ENCODE measurements at regions of chr3 and their contacts with region 1.

Region 1: DNA sequence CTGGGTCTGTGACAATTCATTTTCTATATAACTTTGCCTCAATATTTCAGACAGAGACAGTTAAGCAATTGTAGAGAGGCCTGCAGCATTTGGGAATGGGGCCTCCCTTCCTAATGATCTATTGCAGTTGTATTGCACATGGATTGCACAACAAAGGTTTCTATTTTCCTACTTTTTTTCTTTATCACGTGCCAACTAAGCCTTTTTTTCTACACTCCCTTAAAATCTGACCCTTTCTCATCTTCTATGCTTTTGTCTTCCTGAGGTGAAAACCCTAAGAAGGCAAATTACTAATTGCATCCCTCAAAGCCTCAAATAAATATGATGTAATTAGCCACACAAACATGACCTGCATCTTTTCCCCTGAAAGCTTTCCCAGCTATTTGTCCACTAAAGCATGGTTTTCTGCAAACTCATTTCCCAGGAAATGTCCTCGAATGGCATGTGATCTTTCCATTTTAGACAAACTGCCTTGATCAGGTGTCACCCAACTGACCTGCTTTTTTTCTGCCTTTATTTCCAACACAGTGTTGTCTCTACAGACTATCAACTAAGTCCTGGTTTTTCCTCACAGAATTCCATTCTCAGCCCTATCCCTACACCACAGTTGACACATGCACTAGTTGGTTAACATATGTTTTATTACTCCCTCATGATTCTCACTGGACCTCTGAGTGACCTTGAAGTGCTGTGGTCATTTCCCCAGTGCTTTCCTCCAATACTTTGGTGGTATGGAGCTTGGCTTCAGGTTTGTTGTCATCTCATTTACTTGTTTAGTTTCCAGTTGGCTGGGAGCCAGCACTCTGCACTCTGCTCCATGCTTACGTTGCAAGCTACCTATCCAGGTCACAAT is 31.9 kb upstream of the TSC22D2 start:
- DNase-seq: no peak
- H3K4me3 ChIP-seq: no peak overlapping the region
- H3K27ac ChIP-seq: peak overlapping the region; percentile 19
- H3K4me1 ChIP-seq: no peaks in the 10 kb centered on the region
- H3K27me3 ChIP-seq: no peaks in the 10 kb centered on the region
- CTCF ChIP-seq: no peak
- POLR2A ChIP-seq: no peak

Region 2: GRCh38 chr3:149975919-149976318 is 400.3 kb before region 1 on chr3:
- intact Hi-C with region 1: loop called (anchors 5 kb)
- DNase-seq: no peak
- H3K4me3 ChIP-seq: no peak overlapping the region
- H3K27ac ChIP-seq: no peak overlapping the region
- H3K4me1 ChIP-seq: no peaks in the 10 kb centered on the region
- H3K27me3 ChIP-seq: no peaks in the 10 kb centered on the region
- CTCF ChIP-seq: no peak
- POLR2A ChIP-seq: no peak

Measured in breast epithelium (tissue), 4 donors.